ENCODE measurements at regions of chr17 and their contacts with region 1.

Region 1: GRCh38 chr17:37816950-37817349 is 72.1 kb upstream of the HNF1B start:
- DNase-seq: no peak
- ATAC-seq: no peak
- H3K4me3 Mint-ChIP-seq: no peak overlapping the region
- H3K27ac Mint-ChIP-seq: no peak overlapping the region
- H3K4me1 Mint-ChIP-seq: peaks cover 12% of the 10 kb centered on the region
- H3K27me3 Mint-ChIP-seq: peaks cover 15% of the 10 kb centered on the region
- CTCF ChIP-seq: no peak

Region 2: GRCh38 chr17:37650419-37651003 is 166.4 kb before region 1 on chr17:
- CTCF ChIA-PET with region 1: interaction called, 10 read pairs
- POLR2A ChIA-PET with region 1: no interaction called
- intact Hi-C with region 1: no loop called
- DNase-seq: peak; percentile 17
- ATAC-seq: no peak
- H3K4me3 Mint-ChIP-seq: no peak overlapping the region
- H3K27ac Mint-ChIP-seq: no peak overlapping the region
- H3K4me1 Mint-ChIP-seq: no peaks in the 10 kb centered on the region
- H3K27me3 Mint-ChIP-seq: peaks cover 31% of the 10 kb centered on the region
- CTCF ChIP-seq: peak; percentile 51

Region 3: DNA sequence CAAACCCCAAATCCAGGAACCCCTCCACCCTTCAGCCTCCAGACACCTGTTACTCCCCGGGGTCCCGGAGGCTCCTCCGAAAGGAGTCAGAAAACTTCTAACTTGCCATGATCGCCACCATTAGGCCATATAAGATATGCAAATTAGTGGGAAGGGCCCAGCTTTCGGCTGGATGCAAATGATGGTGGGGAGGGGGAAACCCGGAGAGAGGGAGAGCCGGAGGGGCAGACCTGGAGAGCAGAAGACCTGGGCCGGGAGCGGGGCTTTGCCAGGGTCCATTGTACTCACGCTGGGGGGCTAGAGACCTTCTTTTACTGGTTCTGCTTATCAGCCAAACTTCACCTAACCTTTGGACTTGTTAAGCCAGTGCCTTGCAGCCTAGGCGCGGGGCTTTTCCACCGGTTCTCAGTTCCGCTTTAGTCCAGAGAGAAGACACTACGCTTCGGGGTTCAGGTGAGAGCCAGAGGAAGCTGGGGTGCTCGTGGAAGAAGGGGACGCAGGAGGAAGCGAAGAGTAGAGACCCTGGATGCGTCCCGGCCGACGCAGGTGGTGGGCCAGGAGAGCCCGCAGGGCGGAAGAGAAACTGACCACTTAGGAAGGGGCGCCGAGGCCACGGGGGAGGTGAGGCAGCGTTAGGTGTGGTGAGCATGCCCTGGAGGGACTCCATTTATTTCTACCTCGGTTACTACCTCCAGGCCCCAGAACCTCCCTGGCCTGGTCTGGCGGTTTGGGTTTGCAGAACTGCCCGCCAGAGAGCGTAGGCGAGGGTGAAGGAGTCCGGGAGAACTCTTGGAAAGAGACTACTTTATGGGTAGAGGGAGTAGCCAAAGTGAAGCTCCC is 71.8 kb before region 1 on chr17 and contains the start of gene HNF1B:
- CTCF ChIA-PET with region 1: no interaction called
- POLR2A ChIA-PET with region 1: no interaction called
- intact Hi-C with region 1: no loop called
- DNase-seq: peak; percentile 55
- ATAC-seq: peak; percentile 45
- H3K4me3 Mint-ChIP-seq: peak within 1 kb of the TSS; percentile 45
- H3K27ac Mint-ChIP-seq: no peak within 1 kb of the TSS
- H3K4me1 Mint-ChIP-seq: peaks cover 17% of the 10 kb centered on the region
- H3K27me3 Mint-ChIP-seq: peaks cover 64% of the 10 kb centered on the region
- CTCF ChIP-seq: no peak
- total RNA-seq, gene HNF1B: 0.59 to 0.60 TPM

Region 4: GRCh38 chr17:37797206-37797605 is 19.7 kb before region 1 on chr17:
- CTCF ChIA-PET with region 1: interaction called, 10 read pairs
- POLR2A ChIA-PET with region 1: no interaction called
- intact Hi-C with region 1: no loop called
- DNase-seq: no peak
- ATAC-seq: no peak
- H3K4me3 Mint-ChIP-seq: no peak overlapping the region
- H3K27ac Mint-ChIP-seq: no peak overlapping the region
- H3K4me1 Mint-ChIP-seq: no peaks in the 10 kb centered on the region
- H3K27me3 Mint-ChIP-seq: peaks cover 9% of the 10 kb centered on the region
- CTCF ChIP-seq: no peak

Measured in activated CD8-positive, alpha-beta T cell treated with anti-CD3 and anti-CD28 coated beads for 36 hours (primary cell).